PC-9 (cell line): ENCODE measurements at regions of chr19 and their contacts with region 1.

Region 1: GRCh38 chr19:46211201-46211881 is 18.2 kb upstream of the IGFL1 start:
- DNase-seq: peak; percentile 92 to 99
- H3K4me3 ChIP-seq: peak overlapping the region; percentile 2; the same call in 1 of the 2 replicates
- H3K27ac ChIP-seq: peak overlapping the region; percentile 93
- H3K4me1 ChIP-seq: peaks cover 70% of the 10 kb centered on the region
- H3K27me3 ChIP-seq: no peaks in the 10 kb centered on the region
- CTCF ChIP-seq: no peak

Region 2: DNA sequence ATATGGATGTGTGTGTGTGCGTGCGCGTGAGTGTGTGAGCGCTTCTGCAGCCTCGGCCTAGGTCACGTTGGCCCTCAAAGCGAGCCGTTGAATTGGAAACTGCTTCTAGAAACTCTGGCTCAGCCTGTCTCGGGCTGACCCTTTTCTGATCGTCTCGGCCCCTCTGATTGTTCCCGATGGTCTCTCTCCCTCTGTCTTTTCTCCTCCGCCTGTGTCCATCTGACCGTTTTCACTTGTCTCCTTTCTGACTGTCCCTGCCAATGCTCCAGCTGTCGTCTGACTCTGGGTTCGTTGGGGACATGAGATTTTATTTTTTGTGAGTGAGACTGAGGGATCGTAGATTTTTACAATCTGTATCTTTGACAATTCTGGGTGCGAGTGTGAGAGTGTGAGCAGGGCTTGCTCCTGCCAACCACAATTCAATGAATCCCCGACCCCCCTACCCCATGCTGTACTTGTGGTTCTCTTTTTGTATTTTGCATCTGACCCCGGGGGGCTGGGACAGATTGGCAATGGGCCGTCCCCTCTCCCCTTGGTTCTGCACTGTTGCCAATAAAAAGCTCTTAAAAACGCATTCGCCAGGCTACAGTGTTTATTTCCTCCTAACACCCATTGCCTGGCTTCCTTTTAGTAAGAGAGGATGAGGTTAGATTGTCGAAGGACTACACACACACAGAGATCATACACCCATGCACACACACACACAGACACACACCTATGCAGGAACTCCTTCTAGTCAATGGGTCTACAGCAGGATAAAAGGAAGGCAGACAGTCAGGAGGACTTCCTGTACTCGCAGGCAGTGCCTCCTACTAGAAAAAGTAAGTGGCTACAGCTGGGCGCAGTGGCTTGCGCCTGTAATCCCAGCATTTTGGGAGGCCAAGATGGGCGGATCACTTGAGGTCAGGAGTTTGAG is 736.5 kb before region 1 on chr19:
- CTCF ChIA-PET with region 1: no interaction called
- POLR2A ChIA-PET with region 1: no interaction called
- intact Hi-C with region 1: no loop called
- DNase-seq: no peak
- H3K4me3 ChIP-seq: no peak overlapping the region
- H3K27ac ChIP-seq: no peak overlapping the region
- H3K4me1 ChIP-seq: peaks cover 22% of the 10 kb centered on the region
- H3K27me3 ChIP-seq: no peaks in the 10 kb centered on the region
- CTCF ChIP-seq: no peak

Region 3: GRCh38 chr19:46192992-46193650 is 18.2 kb before region 1 on chr19:
- CTCF ChIA-PET with region 1: no interaction called
- POLR2A ChIA-PET with region 1: interaction called, 5 read pairs
- intact Hi-C with region 1: loop called (anchors 1 kb)
- DNase-seq: peak; percentile 74 to 94
- H3K4me3 ChIP-seq: no peak overlapping the region; the same call in 1 of the 2 replicates
- H3K27ac ChIP-seq: peak overlapping the region; percentile 82
- H3K4me1 ChIP-seq: peaks cover 63% of the 10 kb centered on the region
- H3K27me3 ChIP-seq: no peaks in the 10 kb centered on the region
- CTCF ChIP-seq: no peak

Region 4: GRCh38 chr19:46221981-46222610 is 10.8 kb after region 1 on chr19:
- CTCF ChIA-PET with region 1: interaction called, 9 read pairs
- POLR2A ChIA-PET with region 1: interaction called, 8 read pairs
- intact Hi-C with region 1: loop called (anchors 1 kb)
- DNase-seq: peak; percentile 95 to 99
- H3K4me3 ChIP-seq: no peak overlapping the region
- H3K27ac ChIP-seq: peak overlapping the region; percentile 84
- H3K4me1 ChIP-seq: peaks cover 66% of the 10 kb centered on the region
- H3K27me3 ChIP-seq: no peaks in the 10 kb centered on the region
- CTCF ChIP-seq: no peak

Region 5: DNA sequence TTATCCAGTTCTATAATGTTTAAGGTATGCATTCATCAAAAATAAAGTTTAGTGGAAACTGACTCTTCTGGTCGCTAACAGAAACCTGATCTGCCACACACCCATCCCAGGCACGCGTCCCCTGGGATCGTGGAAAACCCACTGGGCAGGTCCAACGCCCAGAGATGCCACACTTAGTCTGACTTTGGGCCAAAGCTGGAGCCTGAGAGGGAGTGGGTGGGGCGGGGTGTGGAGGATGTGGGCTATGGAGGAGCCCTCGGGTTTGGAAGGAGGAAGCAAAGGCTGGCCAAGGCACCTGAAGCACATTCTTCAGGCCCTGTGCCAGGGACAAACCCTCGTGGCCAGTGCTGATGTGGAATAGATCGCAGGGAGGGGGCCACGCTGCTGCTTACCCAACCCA is 20.7 kb after region 1 on chr19:
- CTCF ChIA-PET with region 1: interaction called, 3 read pairs
- POLR2A ChIA-PET with region 1: no interaction called
- intact Hi-C with region 1: loop called (anchors 1 kb)
- DNase-seq: peak; percentile 96 to 99
- H3K4me3 ChIP-seq: no peak overlapping the region; the same call in 1 of the 2 replicates
- H3K27ac ChIP-seq: peak overlapping the region; percentile 87
- H3K4me1 ChIP-seq: peaks cover 55% of the 10 kb centered on the region
- H3K27me3 ChIP-seq: no peaks in the 10 kb centered on the region
- CTCF ChIP-seq: no peak

Region 6: GRCh38 chr19:46250076-46250735 is 38.9 kb after region 1 on chr19:
- CTCF ChIA-PET with region 1: no interaction called
- POLR2A ChIA-PET with region 1: no interaction called
- intact Hi-C with region 1: loop called (anchors 1 kb)
- DNase-seq: peak in 1 of 2 experiments; percentile 66
- H3K4me3 ChIP-seq: no peak overlapping the region
- H3K27ac ChIP-seq: peak overlapping the region; percentile 48; the same call in 1 of the 2 replicates
- H3K4me1 ChIP-seq: peaks cover 50% of the 10 kb centered on the region
- H3K27me3 ChIP-seq: no peaks in the 10 kb centered on the region
- CTCF ChIP-seq: no peak

Region 7: DNA sequence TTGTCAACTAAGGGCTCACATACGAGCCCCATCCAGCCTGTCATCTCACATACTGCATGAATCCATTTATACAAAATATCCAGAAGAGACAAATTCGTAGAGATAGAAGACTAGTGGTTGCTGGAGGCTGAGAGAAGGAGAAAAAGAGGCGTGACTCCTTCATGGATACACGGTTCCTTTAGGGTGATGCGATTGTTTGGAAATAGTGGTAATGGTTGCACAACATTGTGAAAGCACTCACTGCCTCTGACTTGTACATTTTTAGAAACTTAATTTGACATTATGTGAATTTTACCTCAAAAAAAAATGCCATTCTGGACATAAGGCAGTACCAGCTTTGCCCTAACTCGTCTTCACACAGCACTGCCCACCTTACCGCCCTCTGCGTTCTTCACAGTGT is 45.5 kb after region 1 on chr19:
- CTCF ChIA-PET with region 1: no interaction called
- POLR2A ChIA-PET with region 1: no interaction called
- intact Hi-C with region 1: loop called (anchors 1 kb)
- DNase-seq: peak in 1 of 2 experiments; percentile 50
- H3K4me3 ChIP-seq: no peak overlapping the region
- H3K27ac ChIP-seq: peak overlapping the region; percentile 49
- H3K4me1 ChIP-seq: peaks cover 75% of the 10 kb centered on the region
- H3K27me3 ChIP-seq: no peaks in the 10 kb centered on the region
- CTCF ChIP-seq: no peak

Region 8: DNA sequence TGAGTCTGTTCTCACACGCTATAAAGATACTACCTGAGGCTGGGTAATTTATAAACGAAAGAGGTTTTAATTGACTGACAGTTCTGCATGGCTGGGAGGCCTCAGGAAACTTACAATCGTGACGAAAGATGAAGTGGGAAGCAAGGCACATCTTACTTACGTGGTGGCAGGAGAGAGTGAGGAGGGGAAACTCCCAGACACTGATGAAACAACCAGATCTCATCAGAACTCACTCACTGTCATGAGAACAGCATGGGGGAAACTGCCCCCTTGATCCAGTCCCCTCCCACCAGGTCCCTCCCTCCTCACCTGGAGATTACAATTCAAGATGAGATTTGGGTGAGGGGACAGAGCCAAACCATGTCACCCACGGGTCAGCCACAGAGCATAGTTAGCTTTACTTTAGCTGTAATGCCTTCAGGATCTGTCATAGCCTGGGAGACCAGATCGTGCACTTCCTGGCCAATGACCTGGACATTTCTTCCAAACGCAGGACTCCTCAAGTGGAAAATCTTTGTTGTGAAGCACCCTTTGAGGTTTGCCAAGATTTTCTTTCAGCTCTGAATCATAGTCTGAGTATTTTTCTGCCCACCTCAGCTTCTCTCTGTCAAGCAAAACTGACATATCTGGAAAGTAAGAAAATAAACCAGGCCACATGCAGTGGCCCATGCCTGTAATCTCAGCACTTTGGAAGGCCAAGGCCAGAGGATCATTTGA is 60.3 kb after region 1 on chr19:
- CTCF ChIA-PET with region 1: no interaction called
- POLR2A ChIA-PET with region 1: interaction called, 10 read pairs
- intact Hi-C with region 1: no loop called
- DNase-seq: peak; percentile 78 to 100
- H3K4me3 ChIP-seq: peak overlapping the region; percentile 19; the same call in 1 of the 2 replicates
- H3K27ac ChIP-seq: peak overlapping the region; percentile 87
- H3K4me1 ChIP-seq: peaks cover 29% of the 10 kb centered on the region
- H3K27me3 ChIP-seq: no peaks in the 10 kb centered on the region
- CTCF ChIP-seq: no peak